ENCODE measurements at regions of chr17 and their contacts with region 1.

Region 1: GRCh38 chr17:40577611-40578065 is 12.4 kb upstream of the CCR7 start:
- DNase-seq: peak; percentile 52
- H3K4me3 Mint-ChIP-seq: peak overlapping the region; percentile 29
- H3K27ac Mint-ChIP-seq: peak overlapping the region; percentile 76
- H3K4me1 Mint-ChIP-seq: peaks cover 71% of the 10 kb centered on the region
- H3K27me3 Mint-ChIP-seq: no peaks in the 10 kb centered on the region

Region 2: GRCh38 chr17:40542558-40543411 is 34.9 kb before region 1 on chr17:
- CTCF ChIA-PET with region 1: no interaction called
- POLR2A ChIA-PET with region 1: no interaction called
- DNase-seq: no peak
- H3K4me3 Mint-ChIP-seq: no peak overlapping the region
- H3K27ac Mint-ChIP-seq: peak overlapping the region; percentile 82
- H3K4me1 Mint-ChIP-seq: peaks cover 83% of the 10 kb centered on the region
- H3K27me3 Mint-ChIP-seq: no peaks in the 10 kb centered on the region

Region 3: GRCh38 chr17:40588552-40588951 is 10.9 kb after region 1 on chr17:
- CTCF ChIA-PET with region 1: interaction called, 21 read pairs
- POLR2A ChIA-PET with region 1: no interaction called
- DNase-seq: no peak
- H3K4me3 Mint-ChIP-seq: peak overlapping the region; percentile 14
- H3K27ac Mint-ChIP-seq: peak overlapping the region; percentile 78
- H3K4me1 Mint-ChIP-seq: peaks cover 73% of the 10 kb centered on the region
- H3K27me3 Mint-ChIP-seq: no peaks in the 10 kb centered on the region